Mammary epithelial cell (primary cell): ENCODE measurements at regions of chr6 and their contacts with region 1.

Region 1: DNA sequence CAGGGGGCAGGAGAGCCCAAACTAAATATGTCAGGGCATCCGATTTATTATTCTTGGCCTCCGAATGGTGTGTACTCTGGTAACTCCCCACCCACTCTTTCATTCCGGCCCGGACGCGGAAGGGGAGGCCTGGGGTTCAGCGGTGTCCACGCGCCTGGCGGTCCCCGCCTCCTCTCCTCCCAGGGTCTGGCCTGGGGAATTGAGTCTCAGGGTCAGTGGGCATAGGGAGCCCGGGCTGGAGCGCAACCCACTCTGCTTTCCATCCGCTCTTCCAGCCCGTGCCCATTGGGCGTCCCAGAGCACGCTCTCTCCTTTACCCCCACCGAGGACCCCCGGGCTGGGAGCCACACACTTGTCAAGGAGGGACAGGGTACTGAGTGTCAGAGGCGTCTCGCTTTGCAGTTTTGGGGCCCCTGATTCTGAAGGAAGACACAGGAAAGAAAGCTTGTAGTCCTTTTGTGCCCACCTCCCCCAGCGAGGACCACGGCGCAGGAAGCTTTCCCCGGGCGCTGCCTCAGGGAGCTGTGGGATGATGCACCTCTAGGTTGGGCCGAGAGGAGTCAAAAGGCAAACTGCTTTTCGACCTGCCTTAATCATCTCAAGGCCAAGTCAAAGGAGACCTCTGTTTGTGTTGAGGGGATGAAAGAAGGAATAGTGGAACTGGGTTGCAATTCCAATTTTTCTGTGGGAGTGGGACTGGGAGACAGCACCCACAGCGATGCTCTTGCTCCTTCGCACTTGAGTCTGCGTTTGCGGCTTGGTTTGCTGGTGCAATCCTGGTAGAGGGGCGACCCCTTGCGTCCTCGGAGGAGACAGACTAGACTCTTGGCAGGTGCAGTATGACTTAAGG is 2.5 kb downstream of the RSPO3 start:
- DNase-seq: peak; percentile 52
- H3K4me3 ChIP-seq: no peak overlapping the region
- H3K27ac ChIP-seq: no peak overlapping the region
- H3K4me1 ChIP-seq: peaks cover 15% of the 10 kb centered on the region
- H3K27me3 ChIP-seq: peaks cover 38% of the 10 kb centered on the region
- CTCF ChIP-seq: peak; percentile 65 to 89

Region 2: GRCh38 chr6:125995972-125996580 is 1124.9 kb before region 1 on chr6:
- CTCF ChIA-PET with region 1: no interaction called
- dilution Hi-C with region 1: no loop called
- in situ Hi-C with region 1: no loop called
- intact Hi-C with region 1: loop called (anchors 2 kb)
- DNase-seq: peak; percentile 64
- H3K4me3 ChIP-seq: peak overlapping the region; percentile 25 to 29 (median 26)
- H3K27ac ChIP-seq: no peak overlapping the region
- H3K4me1 ChIP-seq: no peaks in the 10 kb centered on the region
- H3K27me3 ChIP-seq: no peaks in the 10 kb centered on the region
- CTCF ChIP-seq: peak; percentile 96 to 98

Region 3: DNA sequence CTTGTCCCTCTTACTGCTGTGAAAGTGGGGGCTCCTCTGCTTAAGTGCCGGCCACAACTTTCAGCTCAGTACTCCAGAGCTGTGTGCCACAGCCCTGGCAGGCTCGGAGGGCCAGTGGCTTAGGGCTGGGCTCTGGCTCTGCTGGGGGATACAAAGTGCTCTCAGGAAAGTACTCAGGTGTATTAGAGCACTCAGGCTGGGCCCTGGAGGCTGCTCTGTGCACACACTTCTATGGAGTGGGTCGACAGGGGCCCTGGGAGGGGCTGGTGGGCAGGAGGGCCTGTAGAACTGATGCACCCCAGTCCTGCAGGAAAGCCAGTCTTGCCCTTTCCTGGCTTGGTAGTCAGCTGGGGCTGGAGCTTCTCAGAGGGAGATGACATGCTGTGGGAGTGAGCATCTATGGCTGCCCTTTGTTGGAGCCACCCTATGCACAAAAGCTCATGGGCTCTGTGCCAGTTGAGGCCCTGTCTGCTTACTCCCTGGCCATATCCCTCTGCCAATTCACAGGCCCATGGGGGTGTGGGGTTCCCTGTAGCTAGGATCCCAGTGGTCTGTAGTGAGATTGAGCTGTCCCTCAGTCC is 759.1 kb before region 1 on chr6:
- CTCF ChIA-PET with region 1: no interaction called
- dilution Hi-C with region 1: no loop called
- in situ Hi-C with region 1: no loop called
- intact Hi-C with region 1: loop called (anchors 2 kb)
- DNase-seq: no peak
- H3K4me3 ChIP-seq: no peak overlapping the region
- H3K27ac ChIP-seq: no peak overlapping the region
- H3K4me1 ChIP-seq: no peaks in the 10 kb centered on the region
- H3K27me3 ChIP-seq: no peaks in the 10 kb centered on the region
- CTCF ChIP-seq: no peak

Region 4: GRCh38 chr6:126804332-126805064 is 316.5 kb before region 1 on chr6:
- CTCF ChIA-PET with region 1: no interaction called
- dilution Hi-C with region 1: no loop called
- in situ Hi-C with region 1: no loop called
- intact Hi-C with region 1: loop called (anchors 1 kb)
- DNase-seq: peak; percentile 33
- H3K4me3 ChIP-seq: no peak overlapping the region
- H3K27ac ChIP-seq: no peak overlapping the region
- H3K4me1 ChIP-seq: no peaks in the 10 kb centered on the region
- H3K27me3 ChIP-seq: peaks cover 2% of the 10 kb centered on the region
- CTCF ChIP-seq: peak; percentile 74 to 80

Region 5: GRCh38 chr6:127069659-127070279 is 51.2 kb before region 1 on chr6:
- CTCF ChIA-PET with region 1: no interaction called
- dilution Hi-C with region 1: no loop called
- in situ Hi-C with region 1: no loop called
- intact Hi-C with region 1: no loop called
- DNase-seq: peak; percentile 11
- H3K4me3 ChIP-seq: no peak overlapping the region
- H3K27ac ChIP-seq: no peak overlapping the region
- H3K4me1 ChIP-seq: no peaks in the 10 kb centered on the region
- H3K27me3 ChIP-seq: no peaks in the 10 kb centered on the region
- CTCF ChIP-seq: peak; percentile 40 to 61

Region 6: GRCh38 chr6:127266178-127266891 is 145.3 kb after region 1 on chr6 and contains the start of gene RNF146:
- CTCF ChIA-PET with region 1: no interaction called
- dilution Hi-C with region 1: no loop called
- in situ Hi-C with region 1: no loop called
- intact Hi-C with region 1: loop called (anchors 10 kb)
- DNase-seq: peak; percentile 84
- H3K4me3 ChIP-seq: peak within 1 kb of the TSS; percentile 39 to 83 (median 75)
- H3K27ac ChIP-seq: peak within 1 kb of the TSS; percentile 75
- H3K4me1 ChIP-seq: peaks cover 5% of the 10 kb centered on the region
- H3K27me3 ChIP-seq: peaks cover 4% of the 10 kb centered on the region
- CTCF ChIP-seq: peak; percentile 65 to 80
- total RNA-seq, gene RNF146: 28.8 to 37.5 TPM